ENCODE measurements at regions of chr7 and their contacts with region 1.

Region 1: DNA sequence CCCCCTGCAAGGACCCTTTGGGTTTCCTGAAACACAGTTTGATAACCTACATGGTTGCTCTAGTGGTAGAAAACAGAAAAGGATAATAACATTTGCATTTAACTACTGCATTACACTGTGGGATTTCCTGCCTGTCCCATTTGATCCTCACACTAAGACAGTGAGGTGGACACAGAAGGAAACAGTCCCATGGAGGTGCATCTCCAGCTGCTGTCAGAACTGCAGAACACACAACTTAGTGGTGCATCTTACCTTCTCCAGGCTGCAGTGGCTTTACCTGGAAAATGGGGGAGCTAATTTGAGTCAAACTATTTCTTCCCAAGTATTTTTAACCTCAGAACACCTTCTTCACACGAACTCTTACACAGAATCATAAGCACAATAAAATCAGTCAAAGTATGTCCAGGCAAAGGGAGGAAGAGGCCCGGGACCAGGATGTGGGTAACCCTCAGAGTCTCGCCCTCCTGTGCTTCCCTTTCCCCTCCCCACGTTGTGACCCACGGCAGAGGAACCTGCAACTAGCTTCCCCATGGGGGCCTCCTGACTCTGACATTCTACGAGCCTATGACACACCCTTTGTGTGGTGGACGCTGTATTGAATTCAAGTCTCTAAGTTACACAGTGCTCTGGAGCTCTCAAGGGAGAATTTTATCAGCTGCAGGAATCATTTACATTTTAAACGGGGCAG is 33.7 kb downstream of the SCRN1 start:
- DNase-seq: no peak
- H3K4me3 ChIP-seq: no peak overlapping the region
- H3K27ac ChIP-seq: no peak overlapping the region
- H3K4me1 ChIP-seq: peaks cover 0 to 7% (median 3%) of the 10 kb centered on the region in 4 experiments; a peak in 4 of 7 replicates
- H3K27me3 ChIP-seq: no peaks in the 10 kb centered on the region
- CTCF ChIP-seq: no peak
- EP300 ChIP-seq: no peak
- POLR2A ChIP-seq: no peak
- RAD21 ChIP-seq: no peak

Region 2: DNA sequence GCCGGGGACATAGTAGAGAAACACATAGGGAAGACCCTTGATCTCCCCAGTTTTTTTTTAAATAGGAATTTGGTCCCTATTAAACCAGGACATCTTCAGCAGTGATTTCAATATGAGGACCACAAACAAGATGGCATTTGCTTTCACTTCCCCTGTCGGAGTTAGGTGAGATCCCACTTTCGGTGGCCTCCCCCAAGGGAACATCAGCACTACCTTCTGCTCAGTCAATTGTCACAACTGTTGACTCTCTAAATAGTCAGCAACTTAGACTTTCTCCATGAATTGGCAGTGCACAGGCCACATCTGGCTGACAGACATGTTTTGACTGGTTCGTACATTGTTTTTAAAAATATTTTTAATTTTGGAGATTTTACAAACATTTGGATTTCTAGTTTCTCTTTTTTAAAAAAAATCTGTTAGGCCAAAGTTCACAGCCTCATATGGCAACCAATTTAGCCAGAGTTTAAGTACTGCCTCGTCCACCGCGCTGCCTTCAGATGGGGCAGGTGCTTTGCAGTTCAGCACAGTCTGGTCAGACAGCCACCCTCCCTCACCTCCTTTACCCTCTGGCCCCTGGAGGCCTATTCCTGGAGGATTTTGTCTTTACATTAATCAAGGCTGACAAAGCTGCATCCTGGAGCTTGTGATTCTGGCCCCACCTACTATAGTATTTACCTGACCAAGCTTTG is 531.5 kb before region 1 on chr7:
- CTCF ChIA-PET with region 1: no interaction called
- POLR2A ChIA-PET with region 1: no interaction called
- DNase-seq: no peak
- H3K4me3 ChIP-seq: no peak overlapping the region
- H3K27ac ChIP-seq: no peak overlapping the region
- H3K4me1 ChIP-seq: no peaks in the 10 kb centered on the region
- H3K27me3 ChIP-seq: no peaks in the 10 kb centered on the region
- CTCF ChIP-seq: no peak
- EP300 ChIP-seq: no peak
- POLR2A ChIP-seq: no peak
- RAD21 ChIP-seq: no peak

Region 3: GRCh38 chr7:29894256-29894655 is 61.7 kb before region 1 on chr7:
- CTCF ChIA-PET with region 1: no interaction called
- POLR2A ChIA-PET with region 1: no interaction called
- DNase-seq: no peak
- H3K4me3 ChIP-seq: no peak overlapping the region
- H3K27ac ChIP-seq: no peak overlapping the region
- H3K4me1 ChIP-seq: no peaks in the 10 kb centered on the region; a peak in 1 of 7 replicates
- H3K27me3 ChIP-seq: no peaks in the 10 kb centered on the region
- CTCF ChIP-seq: no peak
- EP300 ChIP-seq: no peak
- POLR2A ChIP-seq: no peak
- RAD21 ChIP-seq: no peak

Region 4: DNA sequence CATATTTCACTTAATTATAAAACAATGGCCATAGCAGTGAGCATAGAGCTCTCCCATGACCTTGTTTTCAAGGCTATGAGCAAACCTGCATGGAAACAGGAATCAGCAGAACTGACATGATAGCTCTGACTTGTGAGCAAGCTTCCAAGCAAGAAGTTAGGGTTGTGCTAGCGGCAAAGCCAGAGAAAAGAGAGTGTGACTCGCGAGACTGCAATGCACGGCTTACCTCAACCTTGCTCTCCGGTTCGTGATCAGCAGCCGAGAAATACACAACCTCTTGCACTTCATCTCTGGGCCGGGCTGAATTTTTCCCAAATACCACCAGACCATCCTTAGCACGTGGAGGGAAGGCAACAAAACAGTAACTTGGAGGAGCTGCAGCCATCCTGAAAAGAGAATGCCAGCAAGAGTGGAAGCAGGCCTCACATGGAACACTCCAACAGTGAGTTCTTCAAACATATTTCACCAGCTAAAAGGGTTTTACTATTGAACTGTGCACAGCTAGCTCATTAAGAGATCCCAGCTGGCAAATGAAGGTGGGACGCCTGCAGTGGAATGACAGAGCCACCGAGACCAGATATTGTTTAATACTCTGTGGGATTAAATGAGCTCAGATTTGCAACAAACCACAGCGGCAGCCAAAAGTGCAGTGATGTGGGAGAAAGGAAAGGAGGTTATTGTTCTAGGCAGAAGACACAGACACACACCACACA is 12.9 kb after region 1 on chr7:
- CTCF ChIA-PET with region 1: interaction called, 12 read pairs
- POLR2A ChIA-PET with region 1: no interaction called
- DNase-seq: no peak
- H3K4me3 ChIP-seq: no peak overlapping the region
- H3K27ac ChIP-seq: no peak overlapping the region; the same call in 1 of the 2 replicates
- H3K4me1 ChIP-seq: no peaks in the 10 kb centered on the region
- H3K27me3 ChIP-seq: no peaks in the 10 kb centered on the region
- CTCF ChIP-seq: no peak
- EP300 ChIP-seq: no peak
- POLR2A ChIP-seq: no peak
- RAD21 ChIP-seq: no peak